ENCODE measurements at regions of chr11 and their contacts with region 1.

Region 1: DNA sequence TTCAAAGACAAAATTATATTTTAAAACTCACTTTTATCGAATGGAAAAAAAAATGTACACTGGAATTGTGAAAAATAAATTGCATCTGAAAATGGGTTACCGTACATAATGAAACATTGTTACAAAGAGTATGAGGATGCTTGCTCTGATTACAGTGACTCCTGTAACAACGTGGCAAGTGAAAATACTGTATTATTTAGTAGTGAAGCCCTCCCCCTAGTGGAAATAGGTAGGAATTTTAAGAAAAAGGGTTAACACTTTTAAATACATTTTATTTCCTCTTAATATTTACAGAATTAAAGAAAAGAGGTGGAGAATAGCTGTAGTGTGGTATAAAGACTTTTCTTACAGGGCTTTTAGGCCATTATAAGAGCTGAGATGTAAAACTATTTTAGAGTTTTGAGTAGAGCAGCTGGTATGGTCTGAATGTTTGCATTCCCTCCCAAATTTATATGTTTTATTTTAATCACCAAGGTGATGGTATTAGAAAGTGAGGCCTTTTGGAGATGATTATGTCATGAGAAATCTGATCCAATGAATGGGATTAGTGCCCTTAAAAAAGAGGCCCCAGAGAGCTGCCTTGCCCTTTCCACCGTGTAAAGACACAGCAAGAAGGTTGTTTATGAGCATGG is 25.2 kb downstream of the FAM76B start:
- DNase-seq: peak in 3 of 14 experiments; percentile 73 to 76 (median 75)
- ATAC-seq: peak; percentile 91
- H3K4me3 ChIP-seq: no peak overlapping the region
- H3K4me3 Mint-ChIP-seq: no peak overlapping the region
- H3K27ac ChIP-seq: no peak overlapping the region
- H3K27ac Mint-ChIP-seq: no peak overlapping the region
- H3K4me1 ChIP-seq: no peaks in the 10 kb centered on the region
- H3K4me1 Mint-ChIP-seq: no peaks in the 10 kb centered on the region
- H3K27me3 ChIP-seq: no peaks in the 10 kb centered on the region
- H3K27me3 Mint-ChIP-seq: no peaks in the 10 kb centered on the region
- CTCF ChIP-seq: peak; percentile 80

Region 2: DNA sequence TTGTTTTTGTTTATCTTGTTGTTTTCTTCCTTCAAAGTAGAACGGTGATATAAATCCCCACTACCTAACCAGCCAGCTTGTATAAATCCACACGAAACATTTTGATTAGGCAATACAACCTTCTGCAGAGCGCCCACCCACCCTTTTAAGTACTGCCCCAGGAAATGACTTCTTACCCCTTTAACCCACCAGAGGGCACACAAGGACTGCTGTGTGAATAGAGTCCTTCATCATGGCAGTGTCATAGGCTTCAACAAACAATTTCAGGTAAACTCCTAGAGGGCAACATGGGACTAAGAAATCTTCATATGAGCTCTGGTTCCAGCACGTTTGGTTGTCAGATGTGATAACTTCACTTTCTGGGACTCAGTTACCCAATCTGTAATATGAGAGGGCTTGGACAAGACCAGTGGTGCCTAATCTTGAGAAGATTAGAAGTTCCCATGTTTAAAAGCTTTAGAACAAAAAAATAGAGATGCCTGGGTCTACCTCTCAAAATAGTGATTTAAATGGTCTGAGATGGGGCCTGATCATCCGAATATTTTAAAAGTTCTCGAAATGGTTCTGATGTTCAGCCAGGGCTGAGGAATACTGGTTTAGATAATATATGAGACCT is 1141.2 kb before region 1 on chr11:
- CTCF ChIA-PET with region 1: no interaction called
- POLR2A ChIA-PET with region 1: no interaction called
- intact Hi-C with region 1: loop called (anchors 1 to 5 kb)
- DNase-seq: peak in 13 of 14 experiments; percentile 5 to 71 (median 19)
- ATAC-seq: peak; percentile 91
- H3K4me3 ChIP-seq: no peak overlapping the region
- H3K4me3 Mint-ChIP-seq: no peak overlapping the region
- H3K27ac ChIP-seq: no peak overlapping the region
- H3K27ac Mint-ChIP-seq: no peak overlapping the region
- H3K4me1 ChIP-seq: no peaks in the 10 kb centered on the region
- H3K4me1 Mint-ChIP-seq: no peaks in the 10 kb centered on the region
- H3K27me3 ChIP-seq: no peaks in the 10 kb centered on the region
- H3K27me3 Mint-ChIP-seq: peaks cover 11% of the 10 kb centered on the region
- CTCF ChIP-seq: peak; percentile 48

Region 3: GRCh38 chr11:95076416-95076815 is 688.0 kb before region 1 on chr11:
- CTCF ChIA-PET with region 1: no interaction called
- POLR2A ChIA-PET with region 1: no interaction called
- intact Hi-C with region 1: loop called in 1 of 2 experiments (anchors 5 kb)
- DNase-seq: no peak
- ATAC-seq: no peak
- H3K4me3 ChIP-seq: no peak overlapping the region
- H3K4me3 Mint-ChIP-seq: no peak overlapping the region
- H3K27ac ChIP-seq: no peak overlapping the region
- H3K27ac Mint-ChIP-seq: no peak overlapping the region
- H3K4me1 ChIP-seq: no peaks in the 10 kb centered on the region
- H3K4me1 Mint-ChIP-seq: peaks cover 5% of the 10 kb centered on the region
- H3K27me3 ChIP-seq: no peaks in the 10 kb centered on the region
- H3K27me3 Mint-ChIP-seq: no peaks in the 10 kb centered on the region
- CTCF ChIP-seq: no peak

Region 4: DNA sequence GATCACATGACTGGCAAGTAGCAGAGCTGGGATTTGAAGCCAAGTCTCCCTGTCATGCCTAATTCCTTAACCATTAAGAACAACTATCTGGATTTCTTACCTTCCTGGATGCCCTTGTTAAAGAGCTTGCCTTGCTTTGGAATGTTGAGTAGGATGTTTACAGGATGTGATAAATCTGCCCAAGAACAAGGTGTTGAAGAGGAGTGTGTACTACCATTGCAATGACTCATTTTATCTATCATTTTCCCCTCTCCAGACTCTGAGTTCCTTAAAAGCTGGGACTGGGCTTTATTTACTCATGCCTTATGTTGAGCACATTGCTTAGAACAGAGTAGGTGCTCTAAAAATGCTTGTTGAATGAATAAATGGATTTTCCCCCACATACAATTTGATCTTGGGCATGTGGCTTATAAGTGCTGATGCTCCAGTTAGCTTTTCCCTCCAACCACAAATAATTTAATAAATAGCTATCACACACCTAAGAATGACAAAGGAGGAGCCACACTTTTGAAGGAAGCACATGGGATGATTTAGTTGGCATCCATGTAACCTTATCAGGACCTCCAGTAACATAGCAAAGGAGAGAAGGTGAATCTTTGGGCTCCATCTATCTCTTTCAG is 264.8 kb before region 1 on chr11:
- CTCF ChIA-PET with region 1: no interaction called
- POLR2A ChIA-PET with region 1: no interaction called
- intact Hi-C with region 1: no loop called
- DNase-seq: no peak
- ATAC-seq: no peak
- H3K4me3 ChIP-seq: no peak overlapping the region
- H3K4me3 Mint-ChIP-seq: no peak overlapping the region
- H3K27ac ChIP-seq: no peak overlapping the region
- H3K27ac Mint-ChIP-seq: no peak overlapping the region
- H3K4me1 ChIP-seq: no peaks in the 10 kb centered on the region
- H3K4me1 Mint-ChIP-seq: no peaks in the 10 kb centered on the region
- H3K27me3 ChIP-seq: no peaks in the 10 kb centered on the region
- H3K27me3 Mint-ChIP-seq: no peaks in the 10 kb centered on the region
- CTCF ChIP-seq: no peak

Region 5: DNA sequence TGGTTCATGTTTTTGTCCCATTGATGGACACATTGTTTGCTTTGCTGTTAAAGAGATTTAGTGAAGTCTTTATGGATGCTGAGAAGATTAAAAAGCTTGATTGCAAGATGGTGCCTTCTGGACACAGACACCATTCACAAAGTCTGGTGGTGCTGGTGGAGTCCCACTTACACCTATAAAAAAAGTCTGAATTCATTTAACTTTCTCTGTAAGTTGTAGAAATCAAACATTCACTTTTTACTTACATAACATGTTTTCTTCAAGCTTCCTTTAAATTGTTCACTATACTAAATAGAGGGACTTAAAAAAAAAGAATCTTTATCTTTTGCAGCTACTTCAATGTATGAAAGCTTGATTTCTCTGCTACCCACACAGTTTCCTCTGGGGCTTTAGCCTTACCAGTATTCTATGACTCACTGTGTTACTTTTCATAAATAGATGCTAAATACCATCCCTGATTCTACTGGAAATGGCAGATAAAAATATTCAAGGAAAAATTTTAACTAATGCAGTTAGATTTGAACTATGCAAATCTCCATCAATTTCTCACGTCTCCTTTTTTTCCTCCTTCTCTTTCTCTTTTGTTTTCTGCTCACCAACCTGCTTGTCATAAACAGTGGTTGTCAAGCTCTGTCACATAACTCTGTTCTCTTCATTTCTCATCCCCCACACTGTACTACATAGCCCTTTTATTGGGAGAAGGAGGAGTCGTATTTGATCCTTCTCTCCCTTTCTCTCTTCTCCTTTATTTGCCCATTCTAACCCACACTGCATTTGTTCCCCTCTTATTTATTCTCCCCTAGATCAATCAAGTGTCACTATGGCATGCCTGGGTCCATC is 64.5 kb before region 1 on chr11:
- CTCF ChIA-PET with region 1: interaction called, 3 read pairs
- POLR2A ChIA-PET with region 1: no interaction called
- intact Hi-C with region 1: loop called (anchors 5 kb)
- DNase-seq: peak in 4 of 14 experiments; percentile 33 to 60 (median 52)
- ATAC-seq: peak; percentile 82
- H3K4me3 ChIP-seq: peak overlapping the region; percentile 45
- H3K4me3 Mint-ChIP-seq: peak overlapping the region; percentile 66
- H3K27ac ChIP-seq: peak overlapping the region; percentile 78 to 87
- H3K27ac Mint-ChIP-seq: peak overlapping the region; percentile 92
- H3K4me1 ChIP-seq: peaks cover 56% of the 10 kb centered on the region
- H3K4me1 Mint-ChIP-seq: peaks cover 48% of the 10 kb centered on the region
- H3K27me3 ChIP-seq: no peaks in the 10 kb centered on the region
- H3K27me3 Mint-ChIP-seq: no peaks in the 10 kb centered on the region
- CTCF ChIP-seq: no peak

Measured in CD4-positive, alpha-beta T cell (primary cell).